ENCODE measurements at regions of chr18 and their contacts with region 1.

Region 1: GRCh38 chr18:74006143-74006542 is 141.5 kb downstream of the FBXO15 start:
- DNase-seq: no peak
- H3K4me3 ChIP-seq: no peak overlapping the region
- H3K27ac ChIP-seq: no peak overlapping the region
- H3K4me1 ChIP-seq: no peaks in the 10 kb centered on the region
- H3K27me3 ChIP-seq: peaks cover 18% of the 10 kb centered on the region; the same call in 1 of the 2 replicates

Region 2: GRCh38 chr18:73614812-73615211 is 391.3 kb before region 1 on chr18:
- in situ Hi-C with region 1: no loop called
- DNase-seq: peak; percentile 84
- H3K4me3 ChIP-seq: no peak overlapping the region
- H3K27ac ChIP-seq: peak overlapping the region; percentile 36
- H3K4me1 ChIP-seq: peaks cover 22% of the 10 kb centered on the region
- H3K27me3 ChIP-seq: no peaks in the 10 kb centered on the region

Region 3: DNA sequence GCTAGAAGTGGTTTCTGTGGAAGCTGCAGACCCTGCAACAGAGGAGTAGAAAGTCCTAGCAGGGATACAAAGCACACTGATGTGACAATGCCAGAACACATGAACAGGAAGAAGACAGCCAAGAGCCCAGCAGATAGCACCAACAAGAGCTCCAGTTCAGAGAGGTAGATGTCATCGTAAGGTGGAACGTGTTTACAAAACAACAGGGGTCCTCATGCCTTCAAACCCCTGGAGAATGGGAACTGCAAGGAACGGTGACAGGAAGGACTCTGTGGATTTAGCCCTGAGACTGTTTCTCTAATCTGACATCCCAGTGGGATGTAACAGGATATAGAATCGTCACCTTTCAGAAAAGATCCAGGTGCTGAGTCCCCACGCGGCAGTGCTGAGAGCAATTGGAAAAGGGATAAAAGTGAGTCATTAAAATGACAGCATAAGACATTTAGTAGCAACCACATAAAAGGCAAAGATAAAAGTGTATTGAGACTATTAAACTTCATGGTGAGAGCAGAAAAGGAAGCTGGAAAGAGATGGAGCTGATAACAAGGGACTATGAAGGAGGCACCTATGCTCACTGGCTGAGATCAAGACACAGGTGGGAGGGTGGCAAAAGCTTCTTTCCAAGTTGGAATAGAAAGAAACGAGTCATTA is 53.7 kb before region 1 on chr18:
- in situ Hi-C with region 1: loop called (anchors 5 kb)
- DNase-seq: no peak
- H3K4me3 ChIP-seq: no peak overlapping the region
- H3K27ac ChIP-seq: no peak overlapping the region
- H3K4me1 ChIP-seq: no peaks in the 10 kb centered on the region
- H3K27me3 ChIP-seq: peaks cover 8% of the 10 kb centered on the region; the same call in 1 of the 2 replicates

Measured in GM23248 (cell line).